ENCODE measurements at regions of chr7 and their contacts with region 1.

Region 1: GRCh38 chr7:97117372-97118188 is at the start of gene SDHAF3:
- DNase-seq: peak; percentile 96 to 99 (median 98)
- H3K4me3 ChIP-seq: peak within 1 kb of the TSS; percentile 94
- H3K4me3 Mint-ChIP-seq: peak within 1 kb of the TSS; percentile 90 to 96 (median 93)
- H3K27ac ChIP-seq: peak within 1 kb of the TSS; percentile 81
- H3K27ac Mint-ChIP-seq: peak within 1 kb of the TSS; percentile 92 to 97 (median 94)
- H3K4me1 ChIP-seq: peaks cover 21% of the 10 kb centered on the region
- H3K4me1 Mint-ChIP-seq: peaks cover 32 to 65% (median 47%) of the 10 kb centered on the region in 3 donors
- H3K27me3 ChIP-seq: no peaks in the 10 kb centered on the region
- H3K27me3 Mint-ChIP-seq: no peaks in the 10 kb centered on the region
- total RNA-seq, gene SDHAF3: 35.5 to 36.3 TPM

Region 2: DNA sequence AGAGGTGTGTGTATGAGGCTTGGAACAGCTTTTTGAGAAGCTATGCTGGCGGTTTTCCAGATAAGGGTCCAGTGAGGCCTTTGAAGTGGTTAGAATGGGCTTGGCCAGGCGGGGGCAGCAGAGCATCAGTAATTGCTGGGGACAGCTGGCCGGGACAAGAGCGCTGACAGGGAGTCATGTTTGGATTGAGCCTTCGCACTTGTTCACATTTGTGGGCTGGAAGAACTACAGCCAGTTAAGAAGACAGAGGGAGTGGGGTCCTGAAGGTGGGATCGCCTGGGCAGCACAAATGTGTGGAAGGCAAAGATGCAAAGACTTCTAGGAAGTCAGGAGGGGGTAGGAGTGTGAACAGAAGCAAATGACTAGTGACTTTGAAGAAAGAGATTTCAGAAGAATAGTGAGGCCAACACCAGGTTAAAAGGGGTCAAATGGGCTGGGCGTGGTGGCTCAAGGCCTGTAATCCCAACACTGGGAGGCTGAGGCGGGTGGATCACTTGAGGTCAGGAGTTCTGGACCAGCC is 12.8 kb before region 1 on chr7:
- CTCF ChIA-PET with region 1: interaction called, 10 read pairs
- POLR2A ChIA-PET with region 1: no interaction called
- DNase-seq: peak; percentile 31 to 72 (median 55)
- H3K4me3 ChIP-seq: no peak overlapping the region
- H3K4me3 Mint-ChIP-seq: no peak overlapping the region
- H3K27ac ChIP-seq: no peak overlapping the region
- H3K27ac Mint-ChIP-seq: no peak overlapping the region
- H3K4me1 ChIP-seq: no peaks in the 10 kb centered on the region
- H3K4me1 Mint-ChIP-seq: no peaks in the 10 kb centered on the region
- H3K27me3 ChIP-seq: no peaks in the 10 kb centered on the region
- H3K27me3 Mint-ChIP-seq: peaks cover 11 to 41% of the 10 kb centered on the region in 2 donors

Region 3: GRCh38 chr7:97133159-97133558 is 15.6 kb after region 1 on chr7:
- CTCF ChIA-PET with region 1: no interaction called
- POLR2A ChIA-PET with region 1: no interaction called
- DNase-seq: no peak
- H3K4me3 ChIP-seq: no peak overlapping the region
- H3K4me3 Mint-ChIP-seq: no peak overlapping the region
- H3K27ac ChIP-seq: no peak overlapping the region
- H3K27ac Mint-ChIP-seq: peak overlapping the region in 1 of 8 donors; percentile 25
- H3K4me1 ChIP-seq: no peaks in the 10 kb centered on the region
- H3K4me1 Mint-ChIP-seq: peaks cover 15 to 22% (median 21%) of the 10 kb centered on the region in 3 donors
- H3K27me3 ChIP-seq: no peaks in the 10 kb centered on the region
- H3K27me3 Mint-ChIP-seq: no peaks in the 10 kb centered on the region

Measured in CD8-positive, alpha-beta memory T cell (primary cell).